Astrocyte of the cerebellum (primary cell): ENCODE measurements at regions of chr10 and their contacts with region 1.

Region 1: DNA sequence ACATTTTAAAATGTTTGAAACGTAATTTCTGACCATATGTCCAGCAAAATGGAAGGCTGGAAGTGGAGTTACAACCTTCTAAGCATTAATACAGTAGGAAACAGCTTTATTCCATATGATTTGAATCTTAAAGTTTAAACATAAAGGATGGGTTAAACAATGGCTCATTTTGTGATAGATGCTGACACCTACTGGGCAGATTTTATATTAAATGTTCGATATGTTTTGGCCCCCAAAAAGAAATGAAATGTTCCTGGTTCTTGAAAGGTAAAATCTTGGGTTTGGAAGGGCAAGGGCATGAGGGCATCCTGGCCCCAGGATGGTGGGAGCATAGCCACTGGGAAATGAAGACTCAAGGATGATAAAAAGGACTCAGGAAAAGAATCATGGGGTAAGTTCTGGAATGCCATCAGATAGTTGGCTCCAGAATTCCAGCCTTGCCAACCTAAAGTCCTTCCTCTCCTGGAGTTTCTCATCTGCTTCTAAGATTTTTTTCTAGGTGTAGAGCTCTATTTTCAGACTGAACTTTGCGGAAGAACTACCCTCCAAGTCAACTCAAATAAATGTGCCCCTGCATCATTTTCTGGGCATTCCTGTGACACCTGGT is 34.6 kb upstream of the SLC35G1 start:
- DNase-seq: no peak
- H3K4me3 ChIP-seq: no peak overlapping the region
- CTCF ChIP-seq: no peak

Region 2: GRCh38 chr10:93773120-93773519 is 86.0 kb before region 1 on chr10:
- in situ Hi-C with region 1: loop called (anchors 5 kb)
- DNase-seq: no peak
- H3K4me3 ChIP-seq: no peak overlapping the region
- CTCF ChIP-seq: no peak

Region 3: GRCh38 chr10:93804200-93804599 is 55.0 kb before region 1 on chr10:
- in situ Hi-C with region 1: loop called (anchors 5 kb)
- DNase-seq: no peak
- H3K4me3 ChIP-seq: no peak overlapping the region
- CTCF ChIP-seq: no peak

Region 4: GRCh38 chr10:93916257-93917063 is 57.3 kb after region 1 on chr10:
- in situ Hi-C with region 1: no loop called
- DNase-seq: peak; percentile 49
- H3K4me3 ChIP-seq: no peak overlapping the region
- CTCF ChIP-seq: peak; percentile 55